CD4-positive, alpha-beta T cell (primary cell): ENCODE measurements at regions of chr15 and their contacts with region 1.

Region 1: DNA sequence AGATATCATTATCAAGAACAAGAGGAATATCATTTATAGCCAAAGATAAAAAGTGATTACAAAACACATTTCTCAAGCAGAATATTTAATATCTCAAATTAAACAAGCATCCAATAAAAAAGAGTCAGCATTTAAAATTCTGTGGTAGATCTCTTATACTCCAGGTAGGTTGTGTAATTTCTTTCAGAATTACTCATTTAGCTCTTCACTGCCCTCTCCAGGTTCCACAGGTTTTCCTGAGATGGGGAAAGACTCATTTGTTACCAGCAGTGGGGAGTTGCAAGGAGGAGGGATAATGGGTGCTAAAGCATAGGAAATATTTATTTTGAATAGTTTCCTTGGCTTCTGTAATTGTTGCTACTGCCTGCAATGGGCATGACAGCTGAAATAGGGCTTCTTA is 83.1 kb upstream of the RASGRP1 start:
- DNase-seq: no peak
- ATAC-seq: no peak
- H3K4me3 ChIP-seq: no peak overlapping the region
- H3K4me3 Mint-ChIP-seq: peak overlapping the region; percentile 4
- H3K27ac ChIP-seq: peak overlapping the region in 1 of 2 donors; percentile 20
- H3K27ac Mint-ChIP-seq: peak overlapping the region; percentile 93
- H3K4me1 ChIP-seq: peaks cover 62% of the 10 kb centered on the region
- H3K4me1 Mint-ChIP-seq: peaks cover 81% of the 10 kb centered on the region
- H3K27me3 ChIP-seq: no peaks in the 10 kb centered on the region
- H3K27me3 Mint-ChIP-seq: no peaks in the 10 kb centered on the region
- CTCF ChIP-seq: no peak

Region 2: GRCh38 chr15:38453971-38454695 is 193.6 kb before region 1 on chr15 and contains the start of gene FAM98B:
- CTCF ChIA-PET with region 1: interaction called, 3 read pairs
- POLR2A ChIA-PET with region 1: interaction called, 15 read pairs
- intact Hi-C with region 1: no loop called
- DNase-seq: peak; percentile 72 to 90 (median 84)
- ATAC-seq: peak; percentile 90
- H3K4me3 ChIP-seq: peak within 1 kb of the TSS; percentile 80
- H3K4me3 Mint-ChIP-seq: peak within 1 kb of the TSS; percentile 94
- H3K27ac ChIP-seq: peak within 1 kb of the TSS; percentile 75 to 77
- H3K27ac Mint-ChIP-seq: peak within 1 kb of the TSS; percentile 95
- H3K4me1 ChIP-seq: peaks cover 14% of the 10 kb centered on the region
- H3K4me1 Mint-ChIP-seq: peaks cover 40% of the 10 kb centered on the region
- H3K27me3 ChIP-seq: no peaks in the 10 kb centered on the region
- H3K27me3 Mint-ChIP-seq: no peaks in the 10 kb centered on the region
- CTCF ChIP-seq: no peak
- total RNA-seq, gene FAM98B: 20.1 to 20.4 TPM

Region 3: GRCh38 chr15:38610748-38611147 is 36.9 kb before region 1 on chr15:
- CTCF ChIA-PET with region 1: interaction called, 3 read pairs
- POLR2A ChIA-PET with region 1: interaction called, 36 read pairs
- intact Hi-C with region 1: loop called (anchors 1 to 5 kb)
- DNase-seq: peak in 5 of 14 experiments; percentile 6 to 59 (median 39)
- ATAC-seq: peak; percentile 89
- H3K4me3 ChIP-seq: no peak overlapping the region
- H3K4me3 Mint-ChIP-seq: peak overlapping the region; percentile 1
- H3K27ac ChIP-seq: peak overlapping the region in 1 of 2 donors; percentile 72
- H3K27ac Mint-ChIP-seq: peak overlapping the region; percentile 70
- H3K4me1 ChIP-seq: peaks cover 37% of the 10 kb centered on the region
- H3K4me1 Mint-ChIP-seq: peaks cover 53% of the 10 kb centered on the region
- H3K27me3 ChIP-seq: no peaks in the 10 kb centered on the region
- H3K27me3 Mint-ChIP-seq: no peaks in the 10 kb centered on the region
- CTCF ChIP-seq: no peak

Region 4: DNA sequence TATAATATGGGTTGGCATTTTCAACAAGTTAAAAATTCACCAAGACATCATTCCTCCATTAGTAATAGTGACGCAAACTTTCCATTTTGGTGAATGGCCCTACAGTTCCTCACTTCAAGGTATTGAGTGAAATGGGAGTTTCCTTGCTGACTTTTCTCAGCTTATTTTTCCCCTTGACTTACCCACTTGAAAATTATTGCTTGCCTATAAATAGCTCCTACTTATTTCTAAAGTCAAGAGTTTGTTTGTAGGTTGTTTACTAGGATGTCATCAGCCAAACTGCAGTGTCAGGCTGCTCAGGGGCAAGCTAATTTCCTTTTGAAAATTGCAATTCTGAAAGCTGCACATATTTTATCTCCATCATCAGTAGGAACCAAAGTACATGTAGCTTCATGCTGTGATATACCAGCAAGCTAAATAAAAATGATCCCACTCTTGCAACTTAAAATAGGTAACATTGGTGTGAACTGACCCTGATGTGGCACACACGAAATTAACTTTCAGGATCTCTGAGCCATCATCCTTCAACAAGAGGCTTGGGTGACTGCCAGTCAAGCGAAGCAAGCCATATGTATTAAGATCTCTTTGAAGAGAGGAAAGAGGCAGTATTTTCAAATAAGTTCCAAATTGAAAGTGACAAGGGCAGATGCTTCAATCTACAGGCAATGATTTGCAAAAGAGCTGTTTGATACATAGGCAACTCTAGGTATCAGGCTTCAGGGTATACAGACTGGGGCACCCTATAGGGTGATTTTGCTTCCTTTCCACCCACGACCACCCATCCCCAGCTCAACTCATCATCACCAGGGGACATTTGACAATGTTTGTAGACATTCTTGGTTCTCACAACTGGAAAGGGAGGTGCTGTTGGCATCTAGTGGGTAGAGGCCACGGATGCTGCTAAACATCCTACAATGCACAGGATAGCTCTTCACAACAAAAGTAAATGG is 16.3 kb before region 1 on chr15:
- CTCF ChIA-PET with region 1: interaction called, 5 read pairs
- POLR2A ChIA-PET with region 1: interaction called, 33 read pairs
- intact Hi-C with region 1: no loop called
- DNase-seq: peak in 2 of 14 experiments; percentile 29 to 38
- ATAC-seq: peak; percentile 21
- H3K4me3 ChIP-seq: no peak overlapping the region
- H3K4me3 Mint-ChIP-seq: no peak overlapping the region
- H3K27ac ChIP-seq: peak overlapping the region in 1 of 2 donors; percentile 13
- H3K27ac Mint-ChIP-seq: peak overlapping the region; percentile 62
- H3K4me1 ChIP-seq: peaks cover 26% of the 10 kb centered on the region
- H3K4me1 Mint-ChIP-seq: peaks cover 25% of the 10 kb centered on the region
- H3K27me3 ChIP-seq: no peaks in the 10 kb centered on the region
- H3K27me3 Mint-ChIP-seq: no peaks in the 10 kb centered on the region
- CTCF ChIP-seq: no peak

Region 5: DNA sequence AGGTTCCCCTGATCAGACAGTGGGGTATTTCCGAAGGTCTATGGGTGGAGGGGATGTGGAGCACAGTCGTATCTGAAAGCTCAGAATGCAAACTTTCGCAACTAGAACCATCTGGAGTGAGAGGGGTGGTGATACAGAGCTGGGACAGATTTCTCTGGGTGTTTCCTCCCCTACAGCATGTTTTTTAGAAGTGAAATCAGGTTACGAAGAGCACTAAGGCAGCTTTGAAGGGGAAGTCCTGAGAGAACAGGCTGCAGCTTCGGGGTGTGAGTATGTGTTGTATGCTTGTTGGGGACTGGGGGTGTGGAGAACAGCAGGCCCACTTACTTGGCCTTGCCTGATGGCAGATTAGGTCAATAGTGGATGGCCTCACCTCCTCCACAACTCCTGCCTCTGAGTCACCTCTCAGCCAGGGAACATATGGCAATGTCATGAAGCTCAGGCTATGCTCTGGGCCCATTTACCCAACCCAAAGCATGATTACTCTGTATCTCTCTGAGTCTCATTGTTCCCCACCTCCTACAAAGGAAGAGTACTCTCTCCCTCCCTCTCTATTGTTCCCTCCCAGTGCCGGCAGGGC is 24.1 kb after region 1 on chr15:
- CTCF ChIA-PET with region 1: interaction called, 32 read pairs
- POLR2A ChIA-PET with region 1: interaction called, 484 read pairs
- intact Hi-C with region 1: no loop called
- DNase-seq: peak in 11 of 14 experiments; percentile 23 to 91 (median 44)
- ATAC-seq: peak; percentile 51
- H3K4me3 ChIP-seq: no peak overlapping the region
- H3K4me3 Mint-ChIP-seq: peak overlapping the region; percentile 61
- H3K27ac ChIP-seq: peak overlapping the region; percentile 85 to 94
- H3K27ac Mint-ChIP-seq: peak overlapping the region; percentile 95
- H3K4me1 ChIP-seq: peaks cover 80% of the 10 kb centered on the region
- H3K4me1 Mint-ChIP-seq: peaks cover 68% of the 10 kb centered on the region
- H3K27me3 ChIP-seq: no peaks in the 10 kb centered on the region
- H3K27me3 Mint-ChIP-seq: no peaks in the 10 kb centered on the region
- CTCF ChIP-seq: no peak

Region 6: DNA sequence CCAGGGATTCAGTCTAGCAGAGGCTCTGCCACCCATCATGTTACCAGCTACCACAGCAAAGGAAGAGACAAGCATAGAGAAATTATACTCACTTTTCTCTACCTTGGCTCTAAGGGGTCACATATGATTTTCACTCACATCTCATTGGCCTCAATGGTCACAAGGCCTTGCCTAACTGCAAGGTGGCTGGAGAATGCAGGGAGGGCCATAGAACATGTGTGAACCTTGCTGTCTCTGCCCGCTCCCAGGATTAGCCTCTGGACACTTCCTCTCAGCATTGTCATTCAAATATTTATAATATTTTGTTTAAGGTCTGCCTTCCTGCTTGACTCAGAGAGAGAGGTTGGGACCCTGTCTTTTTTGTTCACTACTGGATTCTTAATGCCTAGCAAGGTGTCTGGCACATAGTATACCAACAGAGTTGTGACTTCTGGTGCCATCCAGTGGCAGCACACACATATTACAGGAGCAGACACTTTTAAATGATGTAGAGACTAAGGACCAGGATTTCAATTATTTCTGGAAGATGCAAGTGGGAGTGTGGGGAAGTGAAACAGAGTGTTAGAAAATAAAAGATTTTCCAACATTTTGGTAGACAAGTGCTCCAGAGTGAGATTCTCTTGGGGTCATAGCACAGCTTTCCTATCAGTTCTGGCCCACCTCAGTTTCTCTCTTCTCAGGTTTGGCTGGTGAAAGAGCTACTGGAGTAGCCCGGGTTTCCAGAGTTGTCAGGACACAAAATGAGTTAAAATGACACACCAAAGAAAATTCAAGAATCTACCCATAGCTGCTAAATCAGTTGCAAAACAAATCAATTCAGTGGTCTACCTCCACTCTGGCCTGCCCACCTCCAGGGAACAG is 35.9 kb after region 1 on chr15:
- CTCF ChIA-PET with region 1: interaction called, 53 read pairs
- POLR2A ChIA-PET with region 1: interaction called, 379 read pairs
- intact Hi-C with region 1: loop called (anchors 1 to 2 kb)
- DNase-seq: peak; percentile 45 to 88 (median 70)
- ATAC-seq: peak; percentile 63
- H3K4me3 ChIP-seq: no peak overlapping the region
- H3K4me3 Mint-ChIP-seq: peak overlapping the region; percentile 2
- H3K27ac ChIP-seq: peak overlapping the region in 1 of 2 donors; percentile 39
- H3K27ac Mint-ChIP-seq: peak overlapping the region; percentile 89
- H3K4me1 ChIP-seq: peaks cover 60% of the 10 kb centered on the region
- H3K4me1 Mint-ChIP-seq: peaks cover 84% of the 10 kb centered on the region
- H3K27me3 ChIP-seq: no peaks in the 10 kb centered on the region
- H3K27me3 Mint-ChIP-seq: no peaks in the 10 kb centered on the region
- CTCF ChIP-seq: peak; percentile 96